Ovary (tissue), 10 donors: ENCODE measurements at regions of chr17 and their contacts with region 1.

Region 1: GRCh38 chr17:58112970-58113631 is 29.9 kb downstream of the DYNLL2 start:
- DNase-seq: peak; percentile 60 to 82 (median 80)
- H3K4me3 ChIP-seq: no peak overlapping the region
- H3K27ac ChIP-seq: no peak overlapping the region
- H3K4me1 ChIP-seq: no peaks in the 10 kb centered on the region
- H3K27me3 ChIP-seq: no peaks in the 10 kb centered on the region
- CTCF ChIP-seq: peak; percentile 70 to 93 (median 86)
- EP300 ChIP-seq: no peak
- POLR2A ChIP-seq: no peak

Region 2: GRCh38 chr17:57121338-57122042 is 991.6 kb before region 1 on chr17:
- intact Hi-C with region 1: loop called in 1 of 4 experiments (anchors 10 kb)
- DNase-seq: peak; percentile 46 to 67 (median 60)
- H3K4me3 ChIP-seq: no peak overlapping the region
- H3K27ac ChIP-seq: no peak overlapping the region
- H3K4me1 ChIP-seq: no peaks in the 10 kb centered on the region
- H3K27me3 ChIP-seq: no peaks in the 10 kb centered on the region
- CTCF ChIP-seq: peak in 1 of 3 donors; percentile 36
- EP300 ChIP-seq: no peak
- POLR2A ChIP-seq: no peak

Region 3: DNA sequence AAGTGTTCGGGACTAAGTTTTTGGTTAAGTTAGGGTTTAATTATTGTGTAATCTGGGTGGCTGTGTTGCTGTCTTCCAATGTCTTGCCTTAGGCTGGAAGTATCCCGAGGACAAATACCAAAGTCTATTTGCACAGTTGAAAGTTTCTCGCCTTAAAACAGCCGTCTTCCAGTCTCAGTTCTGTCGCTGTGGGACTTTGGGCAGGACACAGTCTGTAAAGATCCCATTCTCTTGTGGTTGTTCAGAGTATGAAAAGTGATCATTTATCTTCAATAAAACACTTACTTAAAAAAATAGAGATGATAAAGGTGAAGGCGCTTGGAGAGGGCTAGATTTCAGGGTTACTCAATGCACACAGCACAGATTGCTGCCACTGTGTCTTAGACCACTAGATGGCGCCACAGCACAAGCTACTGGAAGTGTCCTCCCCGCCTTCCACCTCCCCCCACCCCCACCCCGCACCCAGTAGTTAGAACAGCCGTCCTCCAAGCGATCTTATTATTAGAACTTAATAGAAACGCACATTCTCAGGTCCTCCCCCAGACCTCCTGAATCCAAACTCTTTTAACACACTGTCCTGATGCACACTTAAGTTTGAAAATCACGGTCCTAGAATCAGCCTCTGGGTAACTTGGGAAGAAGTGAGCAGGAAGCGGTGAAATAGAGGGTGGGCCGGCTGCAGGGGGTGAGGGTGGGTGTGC is 982.2 kb before region 1 on chr17:
- intact Hi-C with region 1: loop called in 2 of 4 experiments (anchors 10 kb)
- DNase-seq: peak; percentile 83 to 92 (median 88)
- H3K4me3 ChIP-seq: no peak overlapping the region
- H3K27ac ChIP-seq: no peak overlapping the region
- H3K4me1 ChIP-seq: no peaks in the 10 kb centered on the region
- H3K27me3 ChIP-seq: no peaks in the 10 kb centered on the region
- CTCF ChIP-seq: peak; percentile 54 to 90 (median 75)
- EP300 ChIP-seq: no peak
- POLR2A ChIP-seq: no peak

Region 4: GRCh38 chr17:57823469-57824401 is 289.4 kb before region 1 on chr17:
- intact Hi-C with region 1: no loop called
- DNase-seq: no peak
- H3K4me3 ChIP-seq: no peak overlapping the region
- H3K27ac ChIP-seq: no peak overlapping the region
- H3K4me1 ChIP-seq: no peaks in the 10 kb centered on the region
- H3K27me3 ChIP-seq: no peaks in the 10 kb centered on the region
- CTCF ChIP-seq: no peak
- EP300 ChIP-seq: no peak
- POLR2A ChIP-seq: no peak

Region 5: DNA sequence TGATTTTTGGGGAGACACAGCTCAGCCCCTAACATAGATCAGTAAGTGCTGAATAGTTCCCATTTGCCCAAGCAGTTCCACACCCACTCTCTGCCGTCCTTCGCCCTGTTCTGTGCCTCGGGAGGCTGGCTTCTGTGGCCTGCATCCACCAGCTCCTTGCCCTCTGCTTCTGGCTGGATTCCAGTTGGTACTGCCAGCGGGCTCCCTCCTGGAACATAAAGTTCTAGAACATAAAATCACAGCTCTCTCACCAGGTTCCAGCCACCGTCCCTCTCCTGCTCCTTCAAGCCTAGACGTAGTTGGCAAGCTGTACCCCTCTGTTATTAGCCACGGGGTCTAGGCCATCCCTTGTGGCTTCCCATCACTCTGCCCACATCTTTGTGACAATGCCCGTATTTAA is 259.4 kb before region 1 on chr17:
- intact Hi-C with region 1: loop called in 3 of 4 experiments (anchors 2 to 5 kb)
- DNase-seq: peak in 1 of 5 donors; percentile 43
- H3K4me3 ChIP-seq: no peak overlapping the region
- H3K27ac ChIP-seq: peak overlapping the region in 1 of 2 donors; percentile 25
- H3K4me1 ChIP-seq: peaks cover 18% of the 10 kb centered on the region
- H3K27me3 ChIP-seq: no peaks in the 10 kb centered on the region
- CTCF ChIP-seq: no peak
- EP300 ChIP-seq: peak; percentile 33
- POLR2A ChIP-seq: no peak

Region 6: DNA sequence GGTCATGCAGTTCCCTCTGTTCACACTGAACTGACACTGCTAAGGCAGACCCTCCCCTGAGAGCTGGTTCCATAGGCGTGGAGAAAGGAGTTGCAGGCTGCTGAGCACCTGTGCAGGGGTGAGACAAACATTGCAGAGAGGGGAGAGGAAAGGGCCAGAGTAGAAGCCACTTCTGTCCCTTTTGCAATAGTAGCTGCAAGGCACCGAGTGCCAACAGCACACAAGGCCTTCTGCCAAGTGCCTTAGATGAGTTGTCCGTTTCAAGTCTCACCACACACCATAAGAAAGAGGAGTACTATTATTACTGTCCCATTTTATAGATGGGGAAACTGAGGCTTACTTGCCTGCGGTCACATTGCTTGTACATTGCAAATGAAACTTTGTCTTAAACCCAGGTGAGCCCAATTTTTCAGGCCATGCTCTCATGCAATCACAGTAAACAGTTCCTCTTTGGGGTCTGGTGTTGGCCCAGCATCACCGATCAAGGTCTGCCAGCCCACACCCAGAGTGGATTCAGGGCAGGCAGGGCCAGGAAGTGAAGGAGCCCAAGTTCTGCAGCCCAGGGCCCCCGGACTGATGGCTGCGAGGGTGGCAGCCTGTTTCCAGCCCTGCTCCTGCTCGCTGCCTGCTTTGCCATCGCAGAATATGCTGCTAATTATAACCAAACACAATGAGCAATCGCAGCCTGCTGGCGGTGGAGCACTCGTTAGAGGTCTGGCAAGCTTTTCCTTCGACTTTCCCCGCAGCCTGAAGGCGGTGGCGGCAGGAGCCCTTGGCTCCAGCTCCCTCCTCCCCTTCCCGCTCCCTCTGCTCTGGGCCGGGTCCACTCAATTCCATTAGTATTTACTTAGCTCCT is 66.6 kb before region 1 on chr17:
- intact Hi-C with region 1: no loop called
- DNase-seq: no peak
- H3K4me3 ChIP-seq: no peak overlapping the region
- H3K27ac ChIP-seq: no peak overlapping the region
- H3K4me1 ChIP-seq: no peaks in the 10 kb centered on the region
- H3K27me3 ChIP-seq: no peaks in the 10 kb centered on the region
- CTCF ChIP-seq: no peak
- EP300 ChIP-seq: no peak
- POLR2A ChIP-seq: no peak